HAP-1 (cell line): ENCODE measurements at regions of chr15 and their contacts with region 1.

Region 1: GRCh38 chr15:26864664-26865191 is 2.1 kb upstream of the GABRA5 start:
- DNase-seq: peak; percentile 73
- H3K4me3 ChIP-seq: no peak overlapping the region
- H3K4me1 ChIP-seq: no peaks in the 10 kb centered on the region
- H3K27me3 ChIP-seq: no peaks in the 10 kb centered on the region; the same call in 1 of the 2 replicates

Region 2: GRCh38 chr15:25508369-25509002 is 1356.2 kb before region 1 on chr15:
- in situ Hi-C with region 1: loop called (anchors 5 kb)
- DNase-seq: peak; percentile 56 to 82
- H3K4me3 ChIP-seq: no peak overlapping the region
- H3K4me1 ChIP-seq: peaks cover 29% of the 10 kb centered on the region
- H3K27me3 ChIP-seq: no peaks in the 10 kb centered on the region

Region 3: DNA sequence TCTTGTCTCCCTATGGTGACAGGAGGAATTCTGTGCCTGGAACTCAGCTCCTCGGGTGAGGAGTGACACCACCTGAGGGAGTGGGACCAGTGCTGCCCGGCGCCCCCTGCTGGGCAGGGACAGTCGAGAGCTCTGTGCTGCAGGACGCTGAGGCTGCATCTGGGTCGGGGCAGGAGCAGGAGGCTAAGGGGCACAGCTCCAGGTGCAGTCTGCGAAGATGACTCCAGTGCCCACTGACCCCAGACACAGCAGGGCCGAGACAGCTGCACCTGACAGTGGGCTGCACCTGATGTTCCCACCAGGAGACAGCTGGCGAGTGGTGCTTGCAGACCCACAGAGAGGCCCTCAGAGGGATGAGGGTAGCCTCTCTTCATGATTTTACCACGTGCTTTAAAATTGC is 1154.5 kb before region 1 on chr15:
- in situ Hi-C with region 1: loop called (anchors 25 kb)
- DNase-seq: peak; percentile 51 to 86
- H3K4me3 ChIP-seq: no peak overlapping the region
- H3K4me1 ChIP-seq: no peaks in the 10 kb centered on the region
- H3K27me3 ChIP-seq: no peaks in the 10 kb centered on the region

Region 4: GRCh38 chr15:25933456-25934158 is 931.1 kb before region 1 on chr15:
- in situ Hi-C with region 1: loop called (anchors 25 kb)
- DNase-seq: peak; percentile 83 to 85
- H3K4me3 ChIP-seq: no peak overlapping the region
- H3K4me1 ChIP-seq: peaks cover 9% of the 10 kb centered on the region
- H3K27me3 ChIP-seq: no peaks in the 10 kb centered on the region

Region 5: GRCh38 chr15:26260517-26261133 is 604.1 kb before region 1 on chr15:
- in situ Hi-C with region 1: loop called (anchors 25 kb)
- DNase-seq: peak; percentile 63 to 64
- H3K4me3 ChIP-seq: no peak overlapping the region
- H3K4me1 ChIP-seq: no peaks in the 10 kb centered on the region
- H3K27me3 ChIP-seq: no peaks in the 10 kb centered on the region